K562 (cell line): ENCODE measurements at regions of chr1 and their contacts with region 1.

Region 1: GRCh38 chr1:28518000-28518744 is 12.3 kb downstream of the RCC1 start:
- DNase-seq: peak; percentile 93 to 96 (median 94)
- ATAC-seq: peak; percentile 76
- H3K4me3 ChIP-seq: peak overlapping the region; percentile 74
- H3K27ac ChIP-seq: peak overlapping the region; percentile 99
- H3K4me1 ChIP-seq: peaks cover 46 to 47% of the 10 kb centered on the region in 2 experiments
- H3K27me3 ChIP-seq: no peaks in the 10 kb centered on the region
- CTCF ChIP-seq: peak; percentile 96 to 99 (median 96)
- EP300 ChIP-seq: no peak
- POLR2A ChIP-seq: peak; percentile 87
- RAD21 ChIP-seq: peak; percentile 91 to 94

Region 2: DNA sequence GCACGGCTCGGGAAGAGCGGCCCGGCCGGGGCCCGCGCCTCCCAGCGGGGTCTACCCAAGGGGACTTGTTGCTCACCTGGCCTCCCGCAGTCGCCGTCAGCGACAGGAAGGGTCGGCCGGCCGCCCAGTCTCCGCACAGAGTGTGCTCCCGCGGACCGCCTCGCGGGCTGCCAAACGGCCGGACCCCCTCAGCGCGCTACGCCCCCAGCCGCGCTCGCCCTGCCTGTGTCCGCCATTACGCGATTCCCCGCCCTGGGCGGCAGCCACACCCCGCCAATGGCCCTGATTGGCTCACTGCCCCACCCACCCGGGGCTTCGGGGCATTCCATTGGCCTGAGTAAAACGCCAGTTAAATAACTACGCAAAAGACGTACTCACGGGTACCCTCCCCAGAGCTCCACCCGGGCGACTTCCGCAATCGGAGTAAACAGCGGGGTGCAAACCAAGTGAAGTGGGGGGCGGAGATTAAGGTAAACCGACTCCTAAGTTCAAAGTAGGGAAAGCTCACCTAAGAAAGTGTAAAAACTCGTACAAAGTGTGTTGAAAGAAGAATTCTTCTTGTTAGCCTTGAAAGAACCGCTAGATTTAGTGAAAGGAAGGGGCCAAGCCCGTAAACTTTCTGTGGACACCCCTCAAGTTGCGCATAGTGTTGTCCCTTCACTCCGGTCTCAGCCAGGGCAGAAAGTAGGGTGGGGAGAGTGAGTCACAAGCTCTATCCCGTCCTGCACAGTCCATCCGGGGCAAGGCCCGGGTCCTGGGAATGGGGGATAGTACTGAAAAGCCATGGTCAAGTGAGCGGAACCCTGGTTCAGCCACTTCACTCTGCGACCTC is 1028.0 kb before region 1 on chr1 and contains the start of gene WASF2:
- CTCF ChIA-PET with region 1: no interaction called
- POLR2A ChIA-PET with region 1: no interaction called
- in situ Hi-C with region 1: no loop called
- intact Hi-C with region 1: loop called (anchors 5 kb)
- DNase-seq: peak; percentile 93 to 99 (median 98)
- ATAC-seq: peak; percentile 96
- H3K4me3 ChIP-seq: peak within 1 kb of the TSS; percentile 79
- H3K27ac ChIP-seq: peak within 1 kb of the TSS; percentile 99
- H3K4me1 ChIP-seq: peaks cover 8 to 25% of the 10 kb centered on the region in 2 experiments; a peak in 4 of 5 replicates
- H3K27me3 ChIP-seq: no peaks in the 10 kb centered on the region
- CTCF ChIP-seq: no peak; a peak in 1 of 6 replicates
- EP300 ChIP-seq: peak; percentile 5
- POLR2A ChIP-seq: peak; percentile 92
- RAD21 ChIP-seq: 0 out of 4 replicates have a peak, but pooled peaks of 1 of the 2 experiments have one; percentile 13
- polyA plus RNA-seq, gene WASF2: 8.2 to 9.7 TPM

Region 3: GRCh38 chr1:27556781-27557595 is 961.2 kb before region 1 on chr1:
- CTCF ChIA-PET with region 1: no interaction called
- POLR2A ChIA-PET with region 1: no interaction called
- in situ Hi-C with region 1: no loop called
- intact Hi-C with region 1: no loop called
- DNase-seq: peak; percentile 93 to 95 (median 94)
- ATAC-seq: peak; percentile 84
- H3K4me3 ChIP-seq: no peak overlapping the region
- H3K27ac ChIP-seq: peak overlapping the region; percentile 75
- H3K4me1 ChIP-seq: peaks cover 59 to 62% of the 10 kb centered on the region in 2 experiments
- H3K27me3 ChIP-seq: no peaks in the 10 kb centered on the region
- CTCF ChIP-seq: peak; percentile 91 to 93 (median 92)
- EP300 ChIP-seq: no peak; the same call in 1 of the 2 replicates
- POLR2A ChIP-seq: no peak
- RAD21 ChIP-seq: peak; percentile 79 to 89

Region 4: GRCh38 chr1:28409090-28409489 is 109.1 kb before region 1 on chr1:
- CTCF ChIA-PET with region 1: no interaction called
- POLR2A ChIA-PET with region 1: interaction called, 3 read pairs
- in situ Hi-C with region 1: no loop called
- intact Hi-C with region 1: loop called (anchors 5 kb)
- DNase-seq: no peak
- ATAC-seq: no peak
- H3K4me3 ChIP-seq: no peak overlapping the region
- H3K27ac ChIP-seq: no peak overlapping the region
- H3K4me1 ChIP-seq: peaks cover 3 to 23% of the 10 kb centered on the region in 2 experiments; a peak in 3 of 5 replicates
- H3K27me3 ChIP-seq: no peaks in the 10 kb centered on the region
- CTCF ChIP-seq: no peak
- EP300 ChIP-seq: no peak
- POLR2A ChIP-seq: no peak
- RAD21 ChIP-seq: no peak

Region 5: GRCh38 chr1:28494737-28495136 is 23.4 kb before region 1 on chr1:
- CTCF ChIA-PET with region 1: no interaction called
- POLR2A ChIA-PET with region 1: no interaction called
- in situ Hi-C with region 1: no loop called
- intact Hi-C with region 1: no loop called
- DNase-seq: no peak
- ATAC-seq: peak; percentile 51
- H3K4me3 ChIP-seq: no peak overlapping the region
- H3K27ac ChIP-seq: no peak overlapping the region
- H3K4me1 ChIP-seq: peaks cover 6% of the 10 kb centered on the region in 2 experiments; a peak in 2 of 5 replicates
- H3K27me3 ChIP-seq: no peaks in the 10 kb centered on the region
- CTCF ChIP-seq: no peak
- EP300 ChIP-seq: no peak
- POLR2A ChIP-seq: no peak
- RAD21 ChIP-seq: no peak

Region 6: GRCh38 chr1:28552758-28553663 is 34.8 kb after region 1 on chr1 and contains the start of gene TRNAU1AP:
- CTCF ChIA-PET with region 1: no interaction called
- POLR2A ChIA-PET with region 1: interaction called, 9 read pairs
- in situ Hi-C with region 1: no loop called
- intact Hi-C with region 1: loop called (anchors 2 kb)
- DNase-seq: peak; percentile 98 to 99 (median 98)
- ATAC-seq: peak; percentile 98
- H3K4me3 ChIP-seq: peak within 1 kb of the TSS; percentile 57
- H3K27ac ChIP-seq: peak within 1 kb of the TSS; percentile 82
- H3K4me1 ChIP-seq: peaks cover 9 to 20% of the 10 kb centered on the region in 2 experiments; a peak in 4 of 5 replicates
- H3K27me3 ChIP-seq: no peaks in the 10 kb centered on the region
- CTCF ChIP-seq: 0 out of 6 replicates have a peak, but pooled peaks of 1 of the 3 experiments have one; percentile 0
- EP300 ChIP-seq: peak; percentile 47
- POLR2A ChIP-seq: peak; percentile 85
- RAD21 ChIP-seq: no peak
- polyA plus RNA-seq, gene TRNAU1AP: 99.0 to 110 TPM

Region 7: GRCh38 chr1:28682840-28683239 is 164.7 kb after region 1 on chr1:
- CTCF ChIA-PET with region 1: no interaction called
- POLR2A ChIA-PET with region 1: no interaction called
- in situ Hi-C with region 1: no loop called
- intact Hi-C with region 1: no loop called
- DNase-seq: peak in 3 of 4 experiments; percentile 6 to 47 (median 11)
- ATAC-seq: no peak; the same call in 2 of the 3 replicates
- H3K4me3 ChIP-seq: no peak overlapping the region
- H3K27ac ChIP-seq: no peak overlapping the region
- H3K4me1 ChIP-seq: peaks cover 5 to 13% of the 10 kb centered on the region in 2 experiments; a peak in 4 of 5 replicates
- H3K27me3 ChIP-seq: no peaks in the 10 kb centered on the region
- CTCF ChIP-seq: no peak
- EP300 ChIP-seq: no peak
- POLR2A ChIP-seq: no peak
- RAD21 ChIP-seq: no peak

Region 8: GRCh38 chr1:28877132-28877781 is 359.1 kb after region 1 on chr1:
- CTCF ChIA-PET with region 1: interaction called, 6 read pairs
- POLR2A ChIA-PET with region 1: interaction called, 3 read pairs
- in situ Hi-C with region 1: no loop called
- intact Hi-C with region 1: loop called (anchors 2 kb)
- DNase-seq: peak; percentile 81 to 92 (median 82)
- ATAC-seq: peak; percentile 85
- H3K4me3 ChIP-seq: no peak overlapping the region
- H3K27ac ChIP-seq: no peak overlapping the region
- H3K4me1 ChIP-seq: peaks cover 21 to 22% of the 10 kb centered on the region in 2 experiments
- H3K27me3 ChIP-seq: no peaks in the 10 kb centered on the region
- CTCF ChIP-seq: peak; percentile 94 to 99 (median 97)
- EP300 ChIP-seq: no peak
- POLR2A ChIP-seq: no peak
- RAD21 ChIP-seq: peak; percentile 95 to 98